Calu3 (cell line): ENCODE measurements at regions of chr12 and their contacts with region 1.

Region 1: DNA sequence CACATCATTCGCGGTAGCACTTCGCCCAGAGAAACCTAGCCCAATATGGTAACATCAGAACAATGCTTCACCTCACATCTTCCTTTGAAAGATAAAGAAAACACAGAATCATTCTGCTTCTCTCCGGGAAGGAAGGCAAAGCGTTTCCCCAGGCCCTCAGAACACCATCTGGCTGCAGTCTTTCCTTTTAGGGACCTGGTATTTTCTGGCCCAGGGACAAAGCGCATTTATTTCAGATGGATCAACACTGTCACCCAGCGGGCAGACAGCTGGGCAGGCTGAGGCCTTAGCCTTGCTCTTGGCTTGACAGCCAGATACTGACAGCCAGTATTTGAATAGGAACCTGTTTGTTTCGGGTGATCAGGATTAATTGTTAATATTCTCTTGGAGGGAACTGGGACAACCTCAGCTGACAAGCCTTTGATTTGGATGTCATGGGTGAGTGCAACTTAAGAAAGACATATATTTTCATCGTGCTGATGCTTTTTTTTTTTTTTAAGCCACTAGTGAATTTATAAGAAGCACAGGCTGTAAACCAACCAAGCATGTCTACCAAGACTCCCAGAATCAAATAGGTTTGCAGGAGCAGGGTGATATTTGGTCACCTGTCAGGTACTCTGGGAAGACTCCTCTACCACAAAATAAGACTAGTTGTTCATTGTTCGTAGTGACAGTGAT is 118.9 kb downstream of the VEZT start:
- DNase-seq: peak; percentile 85
- H3K4me3 Mint-ChIP-seq: peak overlapping the region; percentile 11
- H3K27ac Mint-ChIP-seq: peak overlapping the region; percentile 42
- H3K4me1 Mint-ChIP-seq: peaks cover 34% of the 10 kb centered on the region
- H3K27me3 Mint-ChIP-seq: no peaks in the 10 kb centered on the region
- CTCF ChIP-seq: peak; percentile 84

Region 2: DNA sequence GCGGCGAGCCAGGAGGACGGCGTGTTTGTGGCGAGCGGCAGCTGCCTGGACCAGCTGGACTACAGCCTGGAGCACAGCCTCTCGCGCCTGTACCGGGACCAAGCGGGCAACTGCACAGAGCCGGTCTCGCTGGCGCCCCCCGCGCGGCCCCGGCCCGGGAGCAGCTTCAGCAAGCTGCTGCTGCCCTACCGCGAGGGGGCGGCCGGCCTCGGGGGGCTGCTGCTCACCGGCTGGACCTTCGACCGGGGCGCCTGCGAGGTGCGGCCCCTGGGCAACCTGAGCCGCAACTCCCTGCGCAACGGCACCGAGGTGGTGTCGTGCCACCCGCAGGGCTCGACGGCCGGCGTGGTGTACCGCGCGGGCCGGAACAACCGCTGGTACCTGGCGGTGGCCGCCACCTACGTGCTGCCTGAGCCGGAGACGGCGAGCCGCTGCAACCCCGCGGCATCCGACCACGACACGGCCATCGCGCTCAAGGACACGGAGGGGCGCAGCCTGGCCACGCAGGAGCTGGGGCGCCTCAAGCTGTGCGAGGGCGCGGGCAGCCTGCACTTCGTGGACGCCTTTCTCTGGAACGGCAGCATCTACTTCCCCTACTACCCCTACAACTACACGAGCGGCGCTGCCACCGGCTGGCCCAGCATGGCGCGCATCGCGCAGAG is 1187.3 kb before region 1 on chr12:
- CTCF ChIA-PET with region 1: no interaction called
- intact Hi-C with region 1: loop called (anchors 10 kb)
- DNase-seq: peak; percentile 50
- H3K4me3 Mint-ChIP-seq: peak overlapping the region; percentile 70
- H3K27ac Mint-ChIP-seq: no peak overlapping the region
- H3K4me1 Mint-ChIP-seq: peaks cover 17% of the 10 kb centered on the region
- H3K27me3 Mint-ChIP-seq: peaks cover 89% of the 10 kb centered on the region
- CTCF ChIP-seq: peak; percentile 36

Region 3: DNA sequence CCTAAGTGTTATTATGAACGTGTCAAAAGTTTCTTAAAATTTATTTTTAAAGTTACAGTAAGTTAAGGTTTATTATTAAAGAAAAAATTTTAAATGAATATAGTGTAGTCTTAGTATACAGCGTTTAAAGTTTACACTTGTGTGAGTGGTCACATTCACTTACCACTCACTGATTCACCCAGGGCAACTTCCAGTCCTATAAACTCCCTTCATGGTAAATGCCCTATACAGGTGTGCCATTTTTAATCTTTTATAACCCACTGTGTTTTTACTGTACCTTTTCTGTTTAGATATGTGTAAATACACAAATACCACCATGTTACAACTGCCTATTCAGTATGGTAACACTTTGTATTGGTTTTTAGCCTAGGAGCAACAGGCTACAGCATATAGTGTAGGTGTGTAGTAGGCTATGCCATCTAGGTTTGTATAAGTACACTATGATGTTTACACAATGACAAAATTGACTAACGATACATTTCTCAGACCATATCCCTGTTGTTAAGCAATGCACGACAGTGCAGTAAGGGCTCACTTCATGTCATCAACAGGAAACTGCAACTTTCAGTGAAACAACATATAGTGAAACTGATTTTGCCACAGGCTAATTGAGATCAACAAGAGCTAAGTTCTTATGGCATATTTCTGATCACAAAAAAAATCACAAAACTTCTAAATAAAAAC is 574.1 kb before region 1 on chr12:
- CTCF ChIA-PET with region 1: no interaction called
- intact Hi-C with region 1: loop called (anchors 5 kb)
- DNase-seq: no peak
- H3K4me3 Mint-ChIP-seq: no peak overlapping the region
- H3K27ac Mint-ChIP-seq: peak overlapping the region; percentile 66
- H3K4me1 Mint-ChIP-seq: peaks cover 22% of the 10 kb centered on the region
- H3K27me3 Mint-ChIP-seq: no peaks in the 10 kb centered on the region
- CTCF ChIP-seq: no peak

Region 4: DNA sequence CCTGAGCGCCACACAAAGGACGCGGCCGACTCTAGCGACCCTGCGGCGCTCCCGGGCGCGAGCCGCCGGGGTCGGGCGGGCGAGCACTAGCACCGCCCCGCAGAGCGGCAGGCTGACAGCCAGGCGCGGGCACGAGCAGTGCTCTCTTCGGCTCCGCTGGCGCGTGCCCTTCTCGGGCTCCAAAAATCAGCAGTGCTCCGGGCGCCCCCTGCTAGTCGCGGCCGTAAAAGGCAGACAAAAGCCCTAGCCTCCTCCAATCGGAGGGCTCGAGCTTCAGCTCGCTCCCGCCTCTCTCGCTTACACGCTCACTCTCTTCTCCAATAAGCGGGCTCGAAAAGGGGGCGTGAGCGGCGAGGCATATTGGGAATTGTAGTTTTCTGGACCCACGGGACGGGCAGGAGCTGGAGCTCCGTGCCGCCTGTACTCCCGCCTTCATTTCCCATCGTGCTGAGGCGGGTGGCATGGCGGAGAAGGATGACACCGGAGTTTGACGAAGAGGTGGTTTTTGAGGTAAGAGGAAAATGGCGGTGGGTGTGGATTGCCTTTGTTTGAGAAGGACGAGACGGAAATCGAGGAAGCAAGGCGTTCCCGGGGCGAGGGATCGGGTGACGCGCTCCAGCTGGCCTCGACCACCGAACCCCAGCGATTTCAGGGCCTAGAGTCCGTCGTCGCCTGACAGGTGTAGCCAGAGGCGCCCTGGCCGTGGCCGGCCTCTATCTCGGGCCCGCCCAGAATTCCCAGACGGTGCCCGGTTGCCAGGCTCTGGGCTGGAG is 119.0 kb before region 1 on chr12 and contains the starts of genes FGD6 and VEZT:
- CTCF ChIA-PET with region 1: interaction called, 6 read pairs
- intact Hi-C with region 1: loop called (anchors 5 kb)
- DNase-seq: peak; percentile 99
- H3K4me3 Mint-ChIP-seq: peak within 1 kb of the TSS; percentile 77
- H3K27ac Mint-ChIP-seq: peak within 1 kb of the TSS; percentile 88
- H3K4me1 Mint-ChIP-seq: peaks cover 8% of the 10 kb centered on the region
- H3K27me3 Mint-ChIP-seq: no peaks in the 10 kb centered on the region
- CTCF ChIP-seq: peak; percentile 63
- total RNA-seq, gene FGD6: 64.5 and 66.6 TPM in 2 replicates
- total RNA-seq, gene VEZT: 149 and 160 TPM in 2 replicates

Region 5: DNA sequence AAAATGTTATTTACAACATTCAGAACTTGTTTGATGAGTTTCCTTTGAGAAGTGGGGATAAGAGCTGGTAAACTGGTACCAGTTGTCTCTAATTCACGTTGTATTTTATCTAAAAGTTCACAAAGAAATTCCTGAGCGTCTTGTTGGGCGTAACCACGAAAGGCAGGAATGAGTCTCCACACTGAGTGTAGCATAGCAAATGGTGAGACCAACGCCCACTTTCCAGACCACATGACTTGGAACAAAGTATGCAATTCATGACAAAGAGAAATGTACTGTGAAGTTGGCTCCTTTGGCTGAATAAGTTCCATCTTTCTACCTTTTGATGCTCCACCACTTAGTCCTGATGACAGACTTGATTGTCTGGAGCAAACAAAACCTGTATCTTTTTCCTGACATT is 196.3 kb after region 1 on chr12:
- CTCF ChIA-PET with region 1: interaction called, 7 read pairs
- intact Hi-C with region 1: loop called (anchors 5 kb)
- DNase-seq: no peak
- H3K4me3 Mint-ChIP-seq: no peak overlapping the region
- H3K27ac Mint-ChIP-seq: no peak overlapping the region
- H3K4me1 Mint-ChIP-seq: peaks cover 9% of the 10 kb centered on the region
- H3K27me3 Mint-ChIP-seq: no peaks in the 10 kb centered on the region
- CTCF ChIP-seq: no peak